Sigmoid colon (tissue), 7 donors: ENCODE measurements at regions of chr14 and their contacts with region 1.

Region 1: GRCh38 chr14:37864861-37865718 is 269.7 kb downstream of the TTC6 start:
- DNase-seq: peak; percentile 74
- H3K4me3 ChIP-seq: no peak overlapping the region
- H3K27ac ChIP-seq: peak overlapping the region in 3 of 4 donors; percentile 37 to 71 (median 64)
- H3K4me1 ChIP-seq: peaks cover 0 to 26% (median 21%) of the 10 kb centered on the region in 4 donors
- H3K27me3 ChIP-seq: no peaks in the 10 kb centered on the region
- CTCF ChIP-seq: no peak
- EP300 ChIP-seq: peak in 2 of 4 donors; percentile 8 to 57
- POLR2A ChIP-seq: no peak

Region 2: GRCh38 chr14:37824939-37825712 is 40.0 kb before region 1 on chr14:
- intact Hi-C with region 1: loop called (anchors 2 kb)
- DNase-seq: no peak
- H3K4me3 ChIP-seq: no peak overlapping the region
- H3K27ac ChIP-seq: peak overlapping the region in 2 of 4 donors; percentile 35 to 46
- H3K4me1 ChIP-seq: peaks cover 0 to 21% (median 13%) of the 10 kb centered on the region in 4 donors
- H3K27me3 ChIP-seq: no peaks in the 10 kb centered on the region
- CTCF ChIP-seq: no peak
- EP300 ChIP-seq: no peak
- POLR2A ChIP-seq: no peak

Region 3: DNA sequence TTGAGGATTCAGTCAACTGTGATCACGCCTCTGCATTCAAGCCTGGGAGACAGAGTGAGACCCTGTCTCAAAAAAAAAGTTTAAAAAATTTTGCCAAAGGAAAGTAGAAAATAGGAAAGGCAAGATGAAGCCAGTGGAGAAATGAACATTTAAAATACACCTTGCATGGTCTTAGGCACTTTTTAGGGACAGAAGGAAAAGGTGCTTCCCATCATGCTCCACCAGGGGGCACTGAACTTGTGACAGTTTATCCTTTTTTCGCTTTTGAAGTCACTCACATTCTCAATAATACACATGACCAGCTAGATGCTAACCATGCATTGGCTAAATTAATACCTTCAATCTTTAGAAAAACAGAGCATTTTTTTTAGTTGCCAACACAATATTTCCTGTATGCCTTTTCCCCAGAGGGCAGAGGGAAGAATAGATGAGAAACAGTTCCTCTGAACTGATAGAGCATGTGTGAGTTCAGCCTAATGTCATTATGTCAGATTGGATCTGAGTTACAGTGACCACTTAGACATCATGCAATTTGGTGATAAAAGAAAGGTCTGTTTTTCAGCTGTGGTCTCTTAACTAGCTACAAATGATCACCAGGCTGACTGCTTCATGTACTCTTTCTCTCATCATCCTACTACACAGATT is 120.9 kb after region 1 on chr14:
- intact Hi-C with region 1: no loop called
- DNase-seq: no peak
- H3K4me3 ChIP-seq: no peak overlapping the region
- H3K27ac ChIP-seq: no peak overlapping the region
- H3K4me1 ChIP-seq: no peaks in the 10 kb centered on the region
- H3K27me3 ChIP-seq: no peaks in the 10 kb centered on the region
- CTCF ChIP-seq: peak in 2 of 4 experiments; percentile 34 to 51
- EP300 ChIP-seq: no peak
- POLR2A ChIP-seq: no peak